Activated T-helper 2 cell treated with anti-CD3 and anti-CD28 coated beads, Interferon-gamma antibody, Interleukin-2, Interleukin-4, amounts not matched to agents 10 μg/mL and 5 μg/mL and 100 μg/mL, durations not matched to agents 14 hours and 24 hours and 36 hours (primary cell): ENCODE measurements at regions of chr3 and their contacts with region 1.

Region 1: DNA sequence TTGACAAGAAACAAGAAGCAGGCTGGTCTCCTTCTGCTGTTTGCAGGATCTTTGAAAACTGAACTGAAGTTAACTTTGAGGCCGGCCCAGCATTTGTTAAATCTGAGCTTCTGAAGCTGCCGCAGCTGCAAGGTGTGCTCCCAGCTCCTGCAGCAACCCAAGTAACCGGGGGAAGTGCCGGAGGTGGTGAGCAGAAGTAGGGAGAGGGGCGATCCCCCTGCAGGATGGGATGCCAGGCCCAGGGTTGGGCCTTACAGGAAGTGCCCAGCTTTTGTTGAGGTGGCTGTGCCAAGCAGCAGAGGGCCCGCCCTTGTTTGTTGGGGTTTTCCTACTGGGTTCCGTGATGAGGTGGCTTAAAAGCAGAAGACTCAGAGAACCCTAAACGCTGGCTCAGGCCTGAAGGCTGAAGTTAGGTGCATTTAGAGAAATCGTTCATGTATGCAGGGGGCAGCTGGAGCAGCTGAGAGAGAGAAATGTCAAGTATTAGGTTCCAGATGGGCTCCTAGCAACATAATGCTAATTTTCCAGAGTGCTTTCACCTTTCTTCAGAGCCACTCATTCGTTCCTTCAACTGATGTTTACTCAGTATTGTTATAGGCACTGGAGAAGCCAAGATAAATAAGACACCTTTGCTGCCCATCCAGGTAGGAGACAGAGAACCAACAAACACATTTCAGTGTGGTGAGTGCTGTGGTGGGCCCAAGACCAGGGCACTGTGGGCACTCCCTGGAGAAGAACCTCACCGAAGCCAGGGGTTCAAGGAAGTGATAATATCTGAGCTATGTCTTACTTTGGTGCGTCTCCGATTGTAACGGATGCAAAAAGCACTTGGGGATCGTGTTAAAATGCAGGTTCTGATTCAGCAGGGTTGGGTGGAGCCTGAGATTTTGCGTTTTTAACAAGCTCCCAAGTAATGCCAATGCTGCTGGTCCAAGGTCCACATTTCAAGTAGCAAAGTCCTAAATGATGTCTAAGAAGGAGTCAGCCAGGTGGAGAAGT is 42.2 kb upstream of the PLCL2 start:
- DNase-seq: peak; percentile 71
- H3K4me3 Mint-ChIP-seq: peak overlapping the region; percentile 75
- H3K27ac Mint-ChIP-seq: peak overlapping the region; percentile 94
- H3K4me1 Mint-ChIP-seq: peaks cover 60% of the 10 kb centered on the region
- H3K27me3 Mint-ChIP-seq: peaks cover 4% of the 10 kb centered on the region

Region 2: DNA sequence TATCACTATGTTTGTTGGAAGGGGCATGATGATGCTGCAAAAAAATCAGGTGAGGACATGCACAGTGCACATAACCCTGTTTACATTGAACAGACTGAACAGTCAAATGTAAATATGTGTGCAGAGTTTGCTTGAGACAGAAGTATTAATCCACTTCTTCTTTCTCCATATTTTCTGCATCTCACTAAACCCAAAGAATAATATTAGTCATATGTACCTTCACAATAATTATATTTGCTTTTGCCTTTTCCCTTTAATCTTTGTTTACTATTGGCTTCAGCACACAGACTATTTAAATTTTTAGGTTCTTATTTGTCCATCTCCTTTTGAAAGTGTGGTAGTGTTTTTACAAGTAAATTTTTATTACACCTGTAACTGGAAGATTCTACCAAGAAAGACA is 219.6 kb before region 1 on chr3:
- intact Hi-C with region 1: no loop called
- DNase-seq: no peak
- H3K4me3 Mint-ChIP-seq: no peak overlapping the region
- H3K27ac Mint-ChIP-seq: no peak overlapping the region
- H3K4me1 Mint-ChIP-seq: no peaks in the 10 kb centered on the region
- H3K27me3 Mint-ChIP-seq: peaks cover 11% of the 10 kb centered on the region

Region 3: GRCh38 chr3:16697443-16698147 is 145.0 kb before region 1 on chr3:
- intact Hi-C with region 1: no loop called
- DNase-seq: no peak
- H3K4me3 Mint-ChIP-seq: no peak overlapping the region
- H3K27ac Mint-ChIP-seq: no peak overlapping the region
- H3K4me1 Mint-ChIP-seq: no peaks in the 10 kb centered on the region
- H3K27me3 Mint-ChIP-seq: peaks cover 16% of the 10 kb centered on the region

Region 4: GRCh38 chr3:16795581-16795980 is 47.0 kb before region 1 on chr3:
- intact Hi-C with region 1: loop called (anchors 2 kb)
- DNase-seq: no peak
- H3K4me3 Mint-ChIP-seq: no peak overlapping the region
- H3K27ac Mint-ChIP-seq: no peak overlapping the region
- H3K4me1 Mint-ChIP-seq: peaks cover 33% of the 10 kb centered on the region
- H3K27me3 Mint-ChIP-seq: peaks cover 11% of the 10 kb centered on the region

Region 5: GRCh38 chr3:17032407-17033034 is 189.9 kb after region 1 on chr3:
- intact Hi-C with region 1: loop called (anchors 5 kb)
- DNase-seq: no peak
- H3K4me3 Mint-ChIP-seq: no peak overlapping the region
- H3K27ac Mint-ChIP-seq: no peak overlapping the region
- H3K4me1 Mint-ChIP-seq: peaks cover 60% of the 10 kb centered on the region
- H3K27me3 Mint-ChIP-seq: no peaks in the 10 kb centered on the region

Region 6: GRCh38 chr3:17233398-17233800 is 390.8 kb after region 1 on chr3:
- intact Hi-C with region 1: loop called (anchors 5 kb)
- DNase-seq: peak; percentile 27
- H3K4me3 Mint-ChIP-seq: no peak overlapping the region
- H3K27ac Mint-ChIP-seq: no peak overlapping the region
- H3K4me1 Mint-ChIP-seq: peaks cover 18% of the 10 kb centered on the region
- H3K27me3 Mint-ChIP-seq: no peaks in the 10 kb centered on the region